CD4-positive, alpha-beta T cell (primary cell): ENCODE measurements at regions of chr2 and their contacts with region 1.

Region 1: GRCh38 chr2:179218848-179219594 is 45.6 kb downstream of the SESTD1 start:
- DNase-seq: peak; percentile 22 to 79 (median 38)
- ATAC-seq: peak; percentile 52
- H3K4me3 ChIP-seq: no peak overlapping the region
- H3K4me3 Mint-ChIP-seq: no peak overlapping the region
- H3K27ac ChIP-seq: no peak overlapping the region
- H3K27ac Mint-ChIP-seq: no peak overlapping the region
- H3K4me1 ChIP-seq: no peaks in the 10 kb centered on the region
- H3K4me1 Mint-ChIP-seq: no peaks in the 10 kb centered on the region
- H3K27me3 ChIP-seq: no peaks in the 10 kb centered on the region
- H3K27me3 Mint-ChIP-seq: no peaks in the 10 kb centered on the region
- CTCF ChIP-seq: peak; percentile 86

Region 2: DNA sequence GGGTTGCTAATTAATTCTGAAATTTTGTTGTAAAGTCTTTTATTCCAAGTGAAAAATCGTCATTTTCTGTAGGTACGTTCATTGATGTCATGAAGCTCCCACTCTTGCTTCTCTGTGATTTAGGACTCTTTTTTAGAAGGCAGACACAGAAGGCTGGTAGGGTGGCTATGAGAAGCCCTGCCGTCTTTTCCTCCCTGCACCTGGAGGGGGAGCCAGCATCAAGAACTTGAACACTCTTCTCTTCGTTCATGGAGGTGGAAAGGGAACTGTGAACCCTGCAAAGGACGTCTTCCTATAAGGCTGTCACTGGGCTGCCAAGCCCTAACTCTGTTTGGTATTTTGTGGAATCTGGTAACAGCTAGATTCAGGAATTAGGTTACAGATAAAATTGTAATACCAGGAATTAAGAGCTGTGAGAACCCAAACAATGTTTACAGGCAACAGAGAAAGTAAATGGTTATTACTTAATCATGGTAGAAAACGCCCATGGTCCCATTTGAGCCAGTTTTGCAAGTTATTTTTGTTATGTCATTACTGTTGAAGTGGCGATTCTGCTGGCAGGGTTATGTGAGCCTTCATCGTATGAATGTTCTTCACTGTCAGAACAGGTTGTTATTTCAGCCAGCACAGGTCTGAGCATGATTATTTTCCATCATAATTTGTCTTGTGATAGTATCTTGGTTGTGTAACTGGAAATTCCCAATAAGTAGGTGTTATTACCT is 912.5 kb before region 1 on chr2:
- CTCF ChIA-PET with region 1: no interaction called
- POLR2A ChIA-PET with region 1: no interaction called
- intact Hi-C with region 1: no loop called
- DNase-seq: peak in 6 of 14 experiments; percentile 2 to 28 (median 6)
- ATAC-seq: no peak
- H3K4me3 ChIP-seq: no peak overlapping the region
- H3K4me3 Mint-ChIP-seq: no peak overlapping the region
- H3K27ac ChIP-seq: no peak overlapping the region
- H3K27ac Mint-ChIP-seq: no peak overlapping the region
- H3K4me1 ChIP-seq: no peaks in the 10 kb centered on the region
- H3K4me1 Mint-ChIP-seq: no peaks in the 10 kb centered on the region
- H3K27me3 ChIP-seq: no peaks in the 10 kb centered on the region
- H3K27me3 Mint-ChIP-seq: peaks cover 10% of the 10 kb centered on the region
- CTCF ChIP-seq: peak; percentile 33

Region 3: DNA sequence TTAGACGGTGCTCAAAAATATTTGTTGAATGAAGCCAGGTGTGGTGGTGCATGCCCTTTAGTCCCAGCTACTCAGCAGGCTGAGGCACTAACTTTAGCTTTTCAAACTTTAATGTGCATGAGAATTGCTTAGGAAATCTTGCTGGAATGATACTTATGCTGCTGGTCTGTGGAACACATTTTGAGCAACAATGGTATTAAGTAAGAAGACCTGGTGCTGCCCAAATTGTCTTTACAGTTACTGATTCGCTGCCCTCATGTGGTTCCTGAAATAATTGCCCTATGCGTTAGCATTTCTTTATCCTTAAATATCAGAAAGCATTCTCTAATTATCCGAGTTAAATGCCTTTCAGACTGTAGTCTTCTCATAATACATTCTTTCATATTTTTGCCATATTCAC is 121.6 kb after region 1 on chr2:
- CTCF ChIA-PET with region 1: no interaction called
- POLR2A ChIA-PET with region 1: no interaction called
- intact Hi-C with region 1: loop called (anchors 2 to 5 kb)
- DNase-seq: peak in 1 of 14 experiments; percentile 23
- ATAC-seq: no peak
- H3K4me3 ChIP-seq: no peak overlapping the region
- H3K4me3 Mint-ChIP-seq: no peak overlapping the region
- H3K27ac ChIP-seq: no peak overlapping the region
- H3K27ac Mint-ChIP-seq: no peak overlapping the region
- H3K4me1 ChIP-seq: no peaks in the 10 kb centered on the region
- H3K4me1 Mint-ChIP-seq: no peaks in the 10 kb centered on the region
- H3K27me3 ChIP-seq: no peaks in the 10 kb centered on the region
- H3K27me3 Mint-ChIP-seq: no peaks in the 10 kb centered on the region
- CTCF ChIP-seq: peak; percentile 24

Region 4: DNA sequence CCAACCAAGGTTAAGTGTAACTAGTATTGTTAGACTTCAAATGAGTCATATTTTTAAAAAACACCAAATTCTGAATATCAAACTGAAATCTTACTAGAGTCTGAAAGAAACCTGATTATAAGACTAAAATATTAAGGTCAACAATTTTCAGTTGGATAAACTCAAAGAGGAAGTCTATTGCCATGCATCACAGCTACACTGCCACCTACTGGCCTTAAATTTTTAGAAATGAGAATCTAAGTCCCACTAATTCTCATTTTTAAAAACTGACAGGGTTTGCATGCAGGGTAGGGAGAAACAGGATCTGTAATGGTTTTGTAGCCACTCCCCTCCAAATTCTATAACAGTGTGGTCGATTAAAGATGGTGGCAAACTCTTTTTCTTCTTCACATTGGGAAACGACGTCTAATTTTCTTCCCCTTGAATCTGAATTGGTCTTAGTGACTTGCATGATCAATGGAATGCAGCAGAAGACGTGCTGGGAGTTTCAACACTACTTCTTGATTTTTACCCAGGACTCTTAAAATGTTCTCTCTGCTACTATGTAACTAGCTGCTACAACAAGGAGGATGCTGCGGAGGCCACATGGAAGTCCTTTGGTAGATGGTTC is 221.7 kb after region 1 on chr2:
- CTCF ChIA-PET with region 1: interaction called, 4 read pairs
- POLR2A ChIA-PET with region 1: no interaction called
- intact Hi-C with region 1: loop called (anchors 1 kb)
- DNase-seq: peak in 3 of 14 experiments; percentile 31 to 54 (median 39)
- ATAC-seq: no peak
- H3K4me3 ChIP-seq: no peak overlapping the region
- H3K4me3 Mint-ChIP-seq: no peak overlapping the region
- H3K27ac ChIP-seq: no peak overlapping the region
- H3K27ac Mint-ChIP-seq: no peak overlapping the region
- H3K4me1 ChIP-seq: no peaks in the 10 kb centered on the region
- H3K4me1 Mint-ChIP-seq: no peaks in the 10 kb centered on the region
- H3K27me3 ChIP-seq: peaks cover 3 to 6% of the 10 kb centered on the region in 2 experiments
- H3K27me3 Mint-ChIP-seq: peaks cover 39% of the 10 kb centered on the region
- CTCF ChIP-seq: peak; percentile 76

Region 5: DNA sequence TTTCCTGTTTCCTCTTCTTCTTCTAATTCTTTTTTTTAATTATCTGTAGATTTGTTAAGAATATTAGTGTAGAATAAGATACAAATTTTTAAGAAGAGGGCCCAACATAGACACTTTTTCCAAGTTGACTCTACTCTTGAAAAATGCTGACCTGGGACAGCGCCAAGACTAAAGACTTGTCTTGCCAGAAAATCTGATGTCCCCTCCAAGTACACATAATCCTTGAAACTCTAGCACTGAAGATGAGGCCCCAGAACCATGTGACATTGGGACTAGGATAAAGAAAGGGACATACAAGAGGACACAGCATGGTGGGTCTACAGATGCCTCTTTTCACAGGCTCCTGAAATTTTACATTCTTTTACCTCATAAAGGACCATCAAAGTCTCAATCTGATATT is 317.2 kb after region 1 on chr2:
- CTCF ChIA-PET with region 1: no interaction called
- POLR2A ChIA-PET with region 1: no interaction called
- intact Hi-C with region 1: no loop called
- DNase-seq: no peak
- ATAC-seq: no peak
- H3K4me3 ChIP-seq: no peak overlapping the region
- H3K4me3 Mint-ChIP-seq: no peak overlapping the region
- H3K27ac ChIP-seq: no peak overlapping the region
- H3K27ac Mint-ChIP-seq: no peak overlapping the region
- H3K4me1 ChIP-seq: no peaks in the 10 kb centered on the region
- H3K4me1 Mint-ChIP-seq: no peaks in the 10 kb centered on the region
- H3K27me3 ChIP-seq: no peaks in the 10 kb centered on the region
- H3K27me3 Mint-ChIP-seq: no peaks in the 10 kb centered on the region
- CTCF ChIP-seq: no peak

Region 6: DNA sequence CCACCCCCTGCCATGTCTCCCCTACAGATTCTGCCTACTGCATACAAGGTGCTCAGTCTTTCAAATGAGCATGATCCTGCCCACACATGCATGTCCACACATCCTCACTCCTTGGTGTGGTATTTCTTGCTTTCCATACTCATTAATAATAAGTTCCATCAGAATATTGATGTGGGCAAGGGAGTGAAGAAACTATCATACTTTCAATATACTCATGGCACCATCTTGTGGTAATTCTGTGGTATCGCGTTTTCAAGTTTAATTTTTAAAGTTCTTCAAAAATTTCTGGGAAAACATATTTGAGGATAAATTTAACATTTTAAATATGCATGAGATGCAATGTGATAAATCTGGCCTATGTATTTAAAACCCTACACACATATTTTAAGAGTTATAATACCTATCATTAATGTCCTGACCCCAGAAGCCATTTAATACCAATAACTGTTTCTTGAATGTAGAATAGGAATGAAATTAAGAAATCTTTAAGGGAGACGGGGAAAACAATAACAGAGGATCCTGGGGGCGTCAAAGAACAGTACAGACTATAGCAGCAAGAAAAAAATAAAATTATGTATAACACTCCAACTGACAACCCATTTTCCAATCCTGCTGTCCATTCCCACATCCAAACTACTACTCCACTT is 532.3 kb after region 1 on chr2:
- CTCF ChIA-PET with region 1: no interaction called
- POLR2A ChIA-PET with region 1: no interaction called
- intact Hi-C with region 1: loop called in 1 of 2 experiments (anchors 5 kb)
- DNase-seq: peak in 2 of 14 experiments; percentile 4 to 7
- ATAC-seq: no peak
- H3K4me3 ChIP-seq: no peak overlapping the region
- H3K4me3 Mint-ChIP-seq: no peak overlapping the region
- H3K27ac ChIP-seq: no peak overlapping the region
- H3K27ac Mint-ChIP-seq: no peak overlapping the region
- H3K4me1 ChIP-seq: no peaks in the 10 kb centered on the region
- H3K4me1 Mint-ChIP-seq: no peaks in the 10 kb centered on the region
- H3K27me3 ChIP-seq: no peaks in the 10 kb centered on the region
- H3K27me3 Mint-ChIP-seq: peaks cover 5% of the 10 kb centered on the region
- CTCF ChIP-seq: peak; percentile 38